GM13976 (cell line): ENCODE measurements at regions of chr9 and their contacts with region 1.

Region 1: GRCh38 chr9:21802195-21803000 is at the start of gene MTAP:
- DNase-seq: peak; percentile 88
- CTCF ChIP-seq: no peak

Region 2: DNA sequence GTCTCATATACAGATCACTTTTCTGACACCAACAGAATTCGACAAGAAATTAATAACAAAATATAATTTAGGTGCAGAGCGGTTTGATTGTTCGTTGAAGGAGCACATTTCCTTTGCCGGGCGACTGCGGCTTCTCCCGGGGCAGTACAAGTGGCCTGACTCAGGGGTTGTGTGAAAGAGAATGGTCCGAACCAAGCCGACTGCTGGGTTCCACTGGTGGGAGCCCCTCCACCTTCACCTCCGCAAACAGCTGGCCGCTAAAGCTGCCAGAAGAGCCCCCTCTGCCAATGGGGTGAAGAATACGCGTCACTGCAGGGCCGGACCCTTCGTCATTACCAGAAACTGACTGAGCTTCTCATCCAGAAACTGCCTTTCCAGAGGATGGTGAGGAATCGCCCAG is 164.3 kb before region 1 on chr9:
- in situ Hi-C with region 1: no loop called
- DNase-seq: no peak
- CTCF ChIP-seq: no peak

Region 3: DNA sequence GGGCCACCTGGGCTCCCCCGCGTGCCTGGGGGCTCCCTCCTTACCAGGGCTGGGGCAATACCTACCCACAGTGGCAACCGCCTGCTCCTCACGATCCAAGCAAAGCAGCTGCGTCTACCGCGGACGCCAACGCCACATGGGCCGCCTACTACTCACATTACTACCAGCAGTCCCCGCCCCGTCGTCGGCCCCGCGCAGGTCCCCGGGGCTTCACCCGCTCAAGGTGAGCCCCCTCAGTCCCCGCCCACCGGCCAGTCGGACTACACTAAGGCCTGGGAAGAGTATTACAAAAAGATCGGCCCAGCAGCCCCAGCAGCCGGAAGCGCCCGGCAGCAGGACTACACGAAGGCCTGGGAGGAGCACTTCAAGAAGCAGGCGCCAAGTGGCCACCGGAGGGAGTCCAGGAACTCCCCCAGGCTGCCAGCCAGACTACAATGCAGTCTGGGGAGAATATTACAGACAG is 106.0 kb before region 1 on chr9:
- in situ Hi-C with region 1: no loop called
- DNase-seq: peak; percentile 16
- CTCF ChIP-seq: no peak

Region 4: DNA sequence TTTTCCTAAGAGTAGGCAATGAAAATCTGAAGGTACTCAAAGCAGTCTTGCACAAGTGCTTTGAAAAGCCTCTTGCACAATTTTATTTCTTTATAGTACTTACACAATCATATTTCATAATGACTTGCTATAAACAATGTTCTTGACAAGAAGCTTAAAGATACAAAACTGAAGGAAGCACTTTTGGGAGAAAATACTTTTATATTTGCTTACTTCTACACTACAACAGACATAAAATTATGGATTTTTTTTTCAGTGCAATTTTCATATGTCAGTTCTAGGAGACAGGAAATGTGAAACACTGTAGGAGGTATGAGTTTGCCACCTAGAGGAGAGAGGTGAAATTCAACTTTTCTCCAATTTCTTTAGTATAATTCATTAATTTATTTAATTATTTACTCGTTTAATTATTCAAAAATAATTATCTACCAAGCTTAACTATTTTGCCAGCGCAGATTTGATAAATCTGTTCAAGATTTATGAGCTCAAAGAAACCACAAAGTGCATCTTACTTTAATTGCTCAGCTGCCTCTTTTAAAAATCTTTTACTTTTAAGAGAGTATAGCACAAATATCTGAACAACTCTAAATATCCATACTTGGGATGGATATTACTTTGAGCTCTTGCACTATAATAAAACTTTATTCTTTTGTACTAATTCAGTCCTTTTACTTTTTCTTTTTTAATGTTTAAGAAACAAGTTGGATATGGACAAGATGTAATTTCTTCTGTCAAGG is 235.7 kb after region 1 on chr9:
- in situ Hi-C with region 1: loop called (anchors 25 kb)
- DNase-seq: no peak
- CTCF ChIP-seq: peak; percentile 21

Region 5: GRCh38 chr9:22238809-22239684 is 436.6 kb after region 1 on chr9:
- in situ Hi-C with region 1: loop called (anchors 10 kb)
- DNase-seq: no peak
- CTCF ChIP-seq: peak; percentile 18

Region 6: DNA sequence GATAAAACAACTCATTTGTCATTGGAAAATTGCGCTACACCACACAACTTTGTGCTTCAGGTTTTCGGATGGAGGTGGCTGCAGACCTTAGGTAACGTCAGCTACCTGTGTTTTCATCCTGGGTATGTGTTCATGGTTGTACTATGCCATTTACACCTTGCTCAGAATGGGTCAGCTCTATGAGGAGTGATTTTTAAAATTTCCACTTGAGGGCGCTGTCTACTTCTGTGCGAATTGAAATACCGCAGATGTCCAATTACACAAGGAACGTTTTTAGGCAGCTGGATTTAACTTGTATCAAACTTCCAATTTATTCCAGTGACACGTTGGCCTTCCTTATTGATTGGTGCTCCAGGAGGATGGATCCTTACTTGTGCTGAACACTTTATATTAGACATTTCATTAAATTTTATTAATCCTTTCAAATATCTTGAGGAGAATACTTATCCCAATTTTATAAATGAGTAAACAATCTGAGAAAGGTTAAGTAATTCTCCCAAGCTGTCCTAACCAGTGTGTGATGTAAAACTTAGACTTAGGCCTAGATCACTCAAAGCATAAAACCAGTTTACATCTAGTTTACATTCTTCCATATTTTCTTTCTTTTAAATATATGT is 667.6 kb after region 1 on chr9:
- in situ Hi-C with region 1: loop called (anchors 25 kb)
- DNase-seq: no peak
- CTCF ChIP-seq: no peak